ENCODE measurements at regions of chr7 and their contacts with region 1.

Region 1: DNA sequence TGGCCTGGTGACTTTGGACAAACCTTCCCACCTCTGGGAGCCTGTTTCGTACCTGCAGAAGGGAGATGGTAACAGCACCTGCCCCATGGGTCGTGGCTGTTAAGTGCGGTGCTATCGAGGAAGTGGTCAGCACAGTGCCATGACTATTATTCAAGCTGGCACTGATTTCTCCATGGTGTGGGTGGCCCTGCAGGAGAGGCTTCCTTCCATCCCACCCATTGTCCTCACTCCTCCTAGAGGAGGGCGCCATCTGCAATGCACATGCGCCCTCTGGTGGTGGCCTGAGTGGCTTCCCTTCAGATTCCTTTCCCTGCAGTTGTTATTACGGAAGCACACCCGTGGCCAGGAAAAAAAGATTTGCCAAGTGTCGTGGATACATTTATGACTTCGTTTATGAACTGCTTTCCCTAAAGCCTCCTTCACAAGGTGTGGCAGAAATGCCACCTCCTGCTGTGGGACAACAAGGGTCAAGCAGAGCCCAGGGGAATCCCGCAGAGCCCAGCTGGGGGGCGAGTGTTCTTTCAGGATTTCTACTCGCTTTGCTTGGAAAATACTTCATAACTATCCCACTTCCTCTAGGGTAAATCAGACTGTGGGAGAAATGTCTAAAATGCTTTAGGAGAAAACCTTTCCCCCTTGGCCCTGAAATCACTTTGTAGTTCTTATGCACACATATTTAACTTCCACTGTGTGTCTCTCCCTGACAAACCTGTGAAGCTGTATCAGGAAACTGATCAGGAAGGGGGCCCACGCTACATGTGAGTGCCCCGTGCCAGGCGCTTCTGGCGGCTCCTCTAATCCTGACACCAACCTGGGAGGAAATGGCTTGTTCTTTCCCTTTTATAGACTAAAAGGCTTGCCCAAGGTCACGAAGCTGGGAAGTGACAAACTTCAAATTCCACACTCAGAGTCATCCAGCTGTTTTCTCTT is 98.0 kb upstream of the ANLN start:
- DNase-seq: peak; percentile 92
- ATAC-seq: peak; percentile 95

Region 2: GRCh38 chr7:35983626-35984025 is 308.0 kb before region 1 on chr7:
- intact Hi-C with region 1: loop called (anchors 5 kb)
- DNase-seq: no peak
- ATAC-seq: no peak

Region 3: DNA sequence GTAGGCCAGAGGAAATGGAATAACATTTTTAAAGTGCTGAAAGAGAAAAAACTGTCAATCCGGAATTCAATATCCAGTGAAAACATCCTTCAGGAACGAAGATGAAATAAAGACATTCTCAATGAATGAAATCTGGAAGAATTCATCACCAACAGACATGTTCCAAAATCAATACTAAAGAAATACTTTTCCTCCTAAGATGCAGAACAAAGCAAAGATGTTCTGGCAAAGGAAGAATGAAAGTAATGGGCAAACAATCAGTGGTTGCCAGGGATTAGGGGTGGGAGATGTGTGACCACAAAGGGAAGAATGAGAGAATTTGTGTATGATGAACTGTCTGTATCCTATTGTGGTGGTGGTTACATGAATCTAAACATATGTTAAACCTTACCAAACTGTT is 191.4 kb before region 1 on chr7:
- intact Hi-C with region 1: no loop called
- DNase-seq: no peak
- ATAC-seq: peak; percentile 41

Region 4: GRCh38 chr7:36806891-36807290 is 515.2 kb after region 1 on chr7:
- intact Hi-C with region 1: no loop called
- DNase-seq: no peak
- ATAC-seq: no peak